ENCODE measurements at regions of chr16 and their contacts with region 1.

Region 1: DNA sequence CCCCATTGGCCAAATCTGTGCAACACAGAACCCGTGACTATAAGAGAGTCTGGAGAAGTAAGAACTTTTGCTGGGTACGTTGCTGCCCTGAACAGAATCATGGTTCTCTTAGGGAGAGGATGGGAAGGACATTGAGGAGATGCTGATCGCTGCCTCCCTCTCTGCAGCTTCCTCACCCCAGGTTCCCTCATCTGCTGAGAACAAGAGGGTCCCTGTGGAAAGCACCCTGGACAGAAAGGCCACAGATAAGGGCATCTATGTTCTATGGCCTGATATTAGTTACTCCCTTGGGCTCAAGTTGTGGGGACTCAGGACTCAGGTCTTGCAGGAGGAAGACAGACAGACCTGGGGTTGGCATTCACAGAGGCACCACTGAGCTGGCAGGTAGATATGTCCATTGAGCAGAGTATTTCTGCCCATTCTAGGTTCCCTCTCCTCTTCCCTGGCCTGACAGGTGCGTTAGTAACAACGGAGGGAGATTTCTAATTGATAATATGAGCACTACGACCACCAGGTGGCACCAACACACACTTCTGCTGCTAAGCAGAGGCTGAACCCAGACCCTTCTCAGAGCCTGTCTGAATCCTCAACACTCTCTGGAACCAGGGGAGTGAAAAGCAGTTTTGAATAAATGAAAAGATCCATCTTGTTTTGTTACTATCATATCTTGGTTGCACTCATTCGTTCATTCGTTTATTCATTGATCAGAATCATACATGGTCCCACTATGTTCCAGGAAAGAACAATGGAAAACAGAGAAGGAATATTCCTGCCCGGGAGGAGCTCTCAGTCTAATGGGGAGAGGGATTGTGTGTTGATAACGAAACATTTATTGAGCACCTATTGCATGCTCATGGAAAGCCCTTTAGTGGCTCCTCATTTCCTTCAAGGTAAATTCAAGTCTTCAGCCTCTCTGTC is 56.4 kb downstream of the SLC6A2 start:
- DNase-seq: peak; percentile 47 to 91 (median 76)

Region 2: GRCh38 chr16:55842369-55843104 is 130.3 kb after region 1 on chr16:
- intact Hi-C with region 1: loop called (anchors 5 kb)
- DNase-seq: peak in 27 of 42 donors; percentile 17 to 81 (median 52)